GM13976 (cell line): ENCODE measurements at regions of chr3 and their contacts with region 1.

Region 1: GRCh38 chr3:141308631-141309085 is 59.6 kb upstream of the ZBTB38 start:
- DNase-seq: no peak
- CTCF ChIP-seq: no peak

Region 2: GRCh38 chr3:141370065-141370533 is 61.4 kb after region 1 on chr3:
- in situ Hi-C with region 1: no loop called
- DNase-seq: peak; percentile 79
- CTCF ChIP-seq: peak; percentile 49

Region 3: GRCh38 chr3:141452036-141452435 is 143.4 kb after region 1 on chr3:
- in situ Hi-C with region 1: loop called (anchors 5 kb)
- DNase-seq: peak; percentile 64
- CTCF ChIP-seq: peak; percentile 74